Mammary epithelial cell (primary cell): ENCODE measurements at regions of chr11 and their contacts with region 1.

Region 1: GRCh38 chr11:117426269-117426685 is 98.6 kb downstream of the CEP164 start:
- DNase-seq: peak; percentile 24
- H3K4me3 ChIP-seq: no peak overlapping the region
- H3K27ac ChIP-seq: no peak overlapping the region
- H3K4me1 ChIP-seq: no peaks in the 10 kb centered on the region
- H3K27me3 ChIP-seq: peaks cover 4% of the 10 kb centered on the region
- CTCF ChIP-seq: peak; percentile 95 to 99

Region 2: GRCh38 chr11:117597071-117597470 is 170.8 kb after region 1 on chr11:
- CTCF ChIA-PET with region 1: no interaction called
- dilution Hi-C with region 1: no loop called
- in situ Hi-C with region 1: no loop called
- intact Hi-C with region 1: loop called (anchors 10 kb)
- DNase-seq: peak; percentile 18
- H3K4me3 ChIP-seq: no peak overlapping the region
- H3K27ac ChIP-seq: no peak overlapping the region
- H3K4me1 ChIP-seq: no peaks in the 10 kb centered on the region
- H3K27me3 ChIP-seq: no peaks in the 10 kb centered on the region
- CTCF ChIP-seq: no peak

Region 3: GRCh38 chr11:117717485-117718314 is 291.4 kb after region 1 on chr11:
- CTCF ChIA-PET with region 1: no interaction called
- dilution Hi-C with region 1: loop called (anchors 10 kb)
- in situ Hi-C with region 1: no loop called
- intact Hi-C with region 1: no loop called
- DNase-seq: no peak
- H3K4me3 ChIP-seq: no peak overlapping the region
- H3K27ac ChIP-seq: no peak overlapping the region
- H3K4me1 ChIP-seq: no peaks in the 10 kb centered on the region
- H3K27me3 ChIP-seq: no peaks in the 10 kb centered on the region
- CTCF ChIP-seq: no peak

Region 4: DNA sequence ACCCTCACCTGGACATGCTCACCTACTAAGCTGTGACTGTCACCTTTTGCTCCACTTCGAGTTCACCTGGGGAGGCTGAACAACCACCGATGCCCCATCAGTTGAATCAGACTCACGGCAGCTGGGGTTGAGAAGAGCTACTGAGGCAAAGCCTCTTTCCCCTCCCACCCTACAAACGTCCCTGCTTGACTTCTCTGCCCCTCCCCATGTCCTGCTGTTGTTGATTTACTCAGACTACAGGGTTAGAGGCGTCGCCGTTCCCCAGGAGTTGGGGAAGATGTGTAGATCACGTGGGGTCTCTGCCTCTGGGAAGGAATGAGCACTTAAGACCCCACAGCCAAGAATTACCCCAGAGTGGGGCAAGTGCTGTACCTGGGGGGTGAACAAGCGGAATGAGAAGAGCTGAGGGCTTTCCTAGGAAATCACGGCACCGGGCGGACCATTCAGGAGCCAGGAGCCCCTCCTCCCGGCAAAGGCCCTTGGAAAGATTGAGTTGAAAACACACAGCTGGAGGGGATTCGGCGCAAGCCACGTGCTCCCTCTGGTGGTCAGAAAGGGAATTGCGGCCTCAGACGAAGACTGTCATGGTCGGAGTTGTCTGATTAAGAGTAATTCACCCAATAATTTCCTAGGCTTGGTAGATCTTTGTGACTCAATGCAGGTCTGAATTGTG is 391.2 kb after region 1 on chr11:
- CTCF ChIA-PET with region 1: interaction called, 35 read pairs
- dilution Hi-C with region 1: no loop called
- in situ Hi-C with region 1: no loop called
- intact Hi-C with region 1: loop called (anchors 1 kb)
- DNase-seq: peak; percentile 63
- H3K4me3 ChIP-seq: no peak overlapping the region
- H3K27ac ChIP-seq: no peak overlapping the region
- H3K4me1 ChIP-seq: peaks cover 10% of the 10 kb centered on the region
- H3K27me3 ChIP-seq: no peaks in the 10 kb centered on the region
- CTCF ChIP-seq: peak; percentile 99 to 100

Region 5: DNA sequence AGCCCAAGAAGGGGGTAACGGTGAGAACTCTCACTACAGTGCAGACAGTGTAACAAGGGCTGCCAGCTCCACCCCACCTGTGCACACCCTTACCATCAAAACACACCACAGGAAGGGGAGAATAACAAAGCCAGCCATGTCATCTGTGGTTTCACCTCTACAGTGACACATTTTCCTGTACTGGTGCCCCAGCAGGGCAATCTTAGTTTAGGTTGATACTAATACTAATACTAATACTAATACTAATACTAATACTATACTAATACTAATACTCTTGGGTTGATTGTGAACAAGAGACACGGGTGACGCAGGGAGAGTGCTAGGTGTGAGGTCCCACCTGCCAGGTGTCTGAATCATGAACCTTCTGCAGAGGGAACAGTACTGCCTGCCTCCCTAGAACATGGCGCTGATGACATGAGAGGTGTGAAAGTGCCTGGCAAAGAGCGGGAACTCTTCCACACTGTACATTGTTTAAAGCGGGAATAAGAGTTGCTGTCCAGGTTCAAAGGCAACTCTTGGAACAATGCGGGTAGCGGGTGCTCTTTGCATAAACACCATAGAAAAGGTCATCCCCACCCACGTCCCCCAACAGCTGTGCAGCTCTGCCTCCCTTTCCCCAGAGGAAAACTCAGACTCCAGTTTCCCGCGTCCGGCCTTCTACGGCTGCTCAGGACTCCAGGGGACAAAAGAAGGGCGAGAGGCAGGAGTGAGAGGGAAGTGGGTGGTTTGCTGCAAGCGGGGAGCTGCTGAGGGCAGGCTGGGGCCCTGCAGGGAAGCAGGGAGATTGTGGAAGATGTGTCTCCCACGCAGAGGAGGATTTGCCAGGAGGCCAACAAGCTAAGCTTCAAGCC is 625.6 kb after region 1 on chr11:
- CTCF ChIA-PET with region 1: no interaction called
- dilution Hi-C with region 1: no loop called
- in situ Hi-C with region 1: no loop called
- intact Hi-C with region 1: loop called (anchors 2 kb)
- DNase-seq: no peak
- H3K4me3 ChIP-seq: no peak overlapping the region
- H3K27ac ChIP-seq: no peak overlapping the region
- H3K4me1 ChIP-seq: no peaks in the 10 kb centered on the region
- H3K27me3 ChIP-seq: no peaks in the 10 kb centered on the region
- CTCF ChIP-seq: no peak